Mammary epithelial cell (primary cell): ENCODE measurements at regions of chr9 and their contacts with region 1.

Region 1: GRCh38 chr9:128034821-128035764 is 32.0 kb downstream of the NAIF1 start:
- DNase-seq: peak; percentile 80
- H3K4me3 ChIP-seq: no peak overlapping the region
- H3K27ac ChIP-seq: no peak overlapping the region
- H3K4me1 ChIP-seq: no peaks in the 10 kb centered on the region
- H3K27me3 ChIP-seq: no peaks in the 10 kb centered on the region
- CTCF ChIP-seq: peak; percentile 73 to 82

Region 2: GRCh38 chr9:127763918-127764384 is 271.1 kb before region 1 on chr9:
- CTCF ChIA-PET with region 1: no interaction called
- dilution Hi-C with region 1: no loop called
- in situ Hi-C with region 1: no loop called
- intact Hi-C with region 1: no loop called
- DNase-seq: no peak
- H3K4me3 ChIP-seq: no peak overlapping the region
- H3K27ac ChIP-seq: no peak overlapping the region
- H3K4me1 ChIP-seq: no peaks in the 10 kb centered on the region
- H3K27me3 ChIP-seq: no peaks in the 10 kb centered on the region
- CTCF ChIP-seq: peak in 1 of 2 donors; percentile 23

Region 3: GRCh38 chr9:127943731-127944144 is 91.4 kb before region 1 on chr9:
- CTCF ChIA-PET with region 1: interaction called, 9 read pairs
- dilution Hi-C with region 1: loop called (anchors 10 kb)
- in situ Hi-C with region 1: loop called (anchors 5 kb)
- intact Hi-C with region 1: loop called (anchors 1 kb)
- DNase-seq: peak; percentile 50
- H3K4me3 ChIP-seq: no peak overlapping the region
- H3K27ac ChIP-seq: no peak overlapping the region
- H3K4me1 ChIP-seq: peaks cover 3% of the 10 kb centered on the region
- H3K27me3 ChIP-seq: no peaks in the 10 kb centered on the region
- CTCF ChIP-seq: peak; percentile 81 to 94

Region 4: GRCh38 chr9:127955294-127956035 is 79.6 kb before region 1 on chr9:
- CTCF ChIA-PET with region 1: no interaction called
- dilution Hi-C with region 1: no loop called
- in situ Hi-C with region 1: no loop called
- intact Hi-C with region 1: loop called (anchors 5 kb)
- DNase-seq: peak; percentile 84
- H3K4me3 ChIP-seq: no peak overlapping the region
- H3K27ac ChIP-seq: no peak overlapping the region
- H3K4me1 ChIP-seq: peaks cover 28% of the 10 kb centered on the region
- H3K27me3 ChIP-seq: no peaks in the 10 kb centered on the region
- CTCF ChIP-seq: peak; percentile 29 to 55

Region 5: DNA sequence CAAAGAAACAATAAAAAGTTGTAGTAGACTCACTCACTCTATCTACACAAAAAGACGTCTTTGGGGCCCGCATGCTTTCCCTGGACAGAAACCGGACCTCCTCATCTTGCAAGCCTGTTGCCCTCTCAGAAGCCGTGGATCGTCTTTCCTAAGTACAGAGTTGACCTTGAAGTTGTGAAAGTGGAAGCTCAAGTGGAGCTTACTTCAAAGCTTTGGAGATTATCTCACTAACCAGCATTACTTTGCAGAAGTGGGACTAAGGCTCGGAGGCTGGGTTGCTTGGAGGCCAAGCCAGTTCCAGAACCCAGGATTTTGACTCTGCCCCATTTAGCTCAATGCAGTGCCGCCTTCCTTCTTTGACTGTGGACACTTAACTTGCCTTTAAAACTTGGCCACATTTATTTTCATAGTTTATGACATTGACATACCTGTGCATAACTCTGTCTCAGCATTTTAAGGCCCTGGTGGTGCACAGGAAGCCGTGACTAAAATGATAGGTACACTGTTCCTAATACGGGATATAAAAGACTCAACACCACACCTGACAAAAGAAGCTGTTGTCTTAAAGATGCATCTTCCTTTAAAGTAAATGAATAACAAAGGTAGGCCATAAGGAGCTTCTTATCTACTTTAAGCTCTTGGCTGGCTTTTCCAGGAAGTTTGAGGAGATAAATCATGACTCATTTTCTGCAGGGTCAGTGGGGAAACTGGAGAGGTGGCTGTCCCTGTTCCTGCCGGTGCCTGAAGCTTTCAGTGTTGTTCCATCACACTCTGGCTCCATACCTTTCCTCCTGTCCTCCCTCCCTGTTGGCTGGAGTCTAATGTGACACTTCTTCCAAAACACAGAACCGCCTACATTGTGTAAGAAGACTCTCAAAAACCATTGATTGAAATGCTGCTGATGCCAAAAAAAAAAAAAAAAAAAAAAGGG is 43.7 kb after region 1 on chr9:
- CTCF ChIA-PET with region 1: no interaction called
- dilution Hi-C with region 1: no loop called
- in situ Hi-C with region 1: no loop called
- intact Hi-C with region 1: loop called (anchors 2 kb)
- DNase-seq: peak; percentile 50
- H3K4me3 ChIP-seq: no peak overlapping the region
- H3K27ac ChIP-seq: no peak overlapping the region
- H3K4me1 ChIP-seq: peaks cover 14% of the 10 kb centered on the region
- H3K27me3 ChIP-seq: no peaks in the 10 kb centered on the region
- CTCF ChIP-seq: no peak